ENCODE measurements at regions of chr11 and their contacts with region 1.

Region 1: GRCh38 chr11:57644748-57645688 is 4.7 kb downstream of the YPEL4 start:
- DNase-seq: peak; percentile 66 to 78 (median 68)
- H3K4me3 ChIP-seq: no peak overlapping the region
- H3K4me3 Mint-ChIP-seq: peak overlapping the region in 1 of 2 donors; percentile 91
- H3K27ac ChIP-seq: no peak overlapping the region
- H3K27ac Mint-ChIP-seq: no peak overlapping the region
- H3K4me1 ChIP-seq: peaks cover 39 to 41% of the 10 kb centered on the region in 2 donors
- H3K4me1 Mint-ChIP-seq: peaks cover 55% of the 10 kb centered on the region
- H3K27me3 ChIP-seq: peaks cover 42 to 46% of the 10 kb centered on the region in 2 donors
- H3K27me3 Mint-ChIP-seq: peaks cover 54 to 65% (median 64%) of the 10 kb centered on the region in 3 donors
- CTCF ChIP-seq: peak; percentile 92

Region 2: GRCh38 chr11:57345555-57346211 is 299.3 kb before region 1 on chr11:
- intact Hi-C with region 1: loop called (anchors 5 to 10 kb)
- DNase-seq: peak; percentile 49 to 77 (median 73)
- H3K4me3 ChIP-seq: no peak overlapping the region
- H3K4me3 Mint-ChIP-seq: no peak overlapping the region
- H3K27ac ChIP-seq: no peak overlapping the region
- H3K27ac Mint-ChIP-seq: peak overlapping the region in 1 of 7 donors; percentile 55
- H3K4me1 ChIP-seq: no peaks in the 10 kb centered on the region
- H3K4me1 Mint-ChIP-seq: peaks cover 8% of the 10 kb centered on the region
- H3K27me3 ChIP-seq: no peaks in the 10 kb centered on the region
- H3K27me3 Mint-ChIP-seq: peaks cover 0 to 9% (median 4%) of the 10 kb centered on the region in 3 donors
- CTCF ChIP-seq: peak; percentile 88

Region 3: GRCh38 chr11:57456960-57457642 is 187.9 kb before region 1 on chr11:
- intact Hi-C with region 1: loop called (anchors 10 kb)
- DNase-seq: peak; percentile 70 to 83 (median 83)
- H3K4me3 ChIP-seq: peak overlapping the region in 1 of 3 experiments; percentile 81
- H3K4me3 Mint-ChIP-seq: peak overlapping the region; percentile 51 to 83
- H3K27ac ChIP-seq: no peak overlapping the region
- H3K27ac Mint-ChIP-seq: peak overlapping the region in 3 of 7 donors; percentile 30 to 82 (median 58)
- H3K4me1 ChIP-seq: peaks cover 37 to 40% of the 10 kb centered on the region in 2 donors
- H3K4me1 Mint-ChIP-seq: peaks cover 35% of the 10 kb centered on the region
- H3K27me3 ChIP-seq: peaks cover 25 to 49% of the 10 kb centered on the region in 2 donors
- H3K27me3 Mint-ChIP-seq: peaks cover 39 to 48% (median 43%) of the 10 kb centered on the region in 3 donors
- CTCF ChIP-seq: peak; percentile 97

Region 4: DNA sequence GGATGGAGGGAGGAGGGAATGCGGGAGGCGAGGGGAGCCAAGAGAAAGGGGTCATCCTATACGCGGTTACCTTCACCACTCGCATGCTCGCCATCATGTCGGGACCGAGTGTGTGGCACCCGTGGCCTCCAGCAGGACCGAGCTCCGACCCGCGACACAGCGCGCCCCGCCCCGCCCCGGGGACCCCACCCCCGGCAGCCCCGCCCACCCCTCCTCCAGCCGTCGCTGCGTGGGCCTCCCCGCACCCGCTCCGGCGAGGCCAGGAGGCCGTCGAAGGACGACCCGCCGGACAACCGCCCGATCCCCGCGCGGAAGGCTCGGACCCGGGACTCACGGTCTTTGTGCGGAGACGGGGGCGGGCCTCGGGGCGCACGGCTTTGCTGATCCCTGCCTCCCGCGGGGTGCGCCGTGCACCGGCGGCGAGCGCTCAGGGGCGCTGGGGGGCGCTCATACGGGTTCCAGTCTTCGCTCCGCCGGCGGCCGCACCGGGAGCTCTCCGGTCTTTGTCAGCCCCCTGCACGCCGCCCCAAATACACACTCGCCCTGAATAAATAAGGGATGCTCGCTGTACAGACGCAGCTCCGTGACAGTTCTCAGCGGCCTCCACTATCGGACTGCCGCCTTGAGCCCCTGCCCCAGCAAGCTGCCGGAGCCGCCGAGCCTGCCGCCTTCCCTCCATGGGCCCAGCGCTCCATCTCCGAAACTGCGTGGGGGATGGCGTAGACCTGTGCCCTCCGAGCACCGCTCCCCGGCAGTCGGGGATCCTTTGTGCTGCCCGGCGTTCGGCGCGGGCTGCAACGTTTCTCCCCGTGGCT is 77.3 kb before region 1 on chr11 and contains the start of gene UBE2L6:
- intact Hi-C with region 1: loop called (anchors 2 kb)
- DNase-seq: peak in 1 of 3 donors; percentile 15
- H3K4me3 ChIP-seq: peak within 1 kb of the TSS; percentile 69 to 100 (median 98)
- H3K4me3 Mint-ChIP-seq: peak within 1 kb of the TSS; percentile 97 to 98
- H3K27ac ChIP-seq: peak within 1 kb of the TSS; percentile 63 to 93
- H3K27ac Mint-ChIP-seq: peak within 1 kb of the TSS; percentile 84 to 95 (median 93)
- H3K4me1 ChIP-seq: peaks cover 42 to 58% of the 10 kb centered on the region in 2 donors
- H3K4me1 Mint-ChIP-seq: peaks cover 56% of the 10 kb centered on the region
- H3K27me3 ChIP-seq: no peaks in the 10 kb centered on the region
- H3K27me3 Mint-ChIP-seq: peaks cover 0 to 2% (median 0%) of the 10 kb centered on the region in 3 donors
- CTCF ChIP-seq: peak; percentile 98
- polyA plus RNA-seq, gene UBE2L6: 101 to 284 (median 268) TPM